K562 (cell line): ENCODE measurements at regions of chr3 and their contacts with region 1.

Region 1: GRCh38 chr3:33041909-33042308 is 55.0 kb downstream of the GLB1 start:
- DNase-seq: peak in 2 of 4 experiments; percentile 44 to 53
- ATAC-seq: peak; percentile 91
- H3K4me3 ChIP-seq: no peak overlapping the region
- H3K27ac ChIP-seq: no peak overlapping the region; the same call in 2 of the 3 replicates
- H3K4me1 ChIP-seq: peaks cover 2 to 4% of the 10 kb centered on the region in 2 experiments; a peak in 3 of 5 replicates
- H3K27me3 ChIP-seq: no peaks in the 10 kb centered on the region
- CTCF ChIP-seq: no peak
- EP300 ChIP-seq: peak; percentile 7; the same call in 1 of the 2 replicates
- POLR2A ChIP-seq: no peak
- RAD21 ChIP-seq: no peak

Region 2: DNA sequence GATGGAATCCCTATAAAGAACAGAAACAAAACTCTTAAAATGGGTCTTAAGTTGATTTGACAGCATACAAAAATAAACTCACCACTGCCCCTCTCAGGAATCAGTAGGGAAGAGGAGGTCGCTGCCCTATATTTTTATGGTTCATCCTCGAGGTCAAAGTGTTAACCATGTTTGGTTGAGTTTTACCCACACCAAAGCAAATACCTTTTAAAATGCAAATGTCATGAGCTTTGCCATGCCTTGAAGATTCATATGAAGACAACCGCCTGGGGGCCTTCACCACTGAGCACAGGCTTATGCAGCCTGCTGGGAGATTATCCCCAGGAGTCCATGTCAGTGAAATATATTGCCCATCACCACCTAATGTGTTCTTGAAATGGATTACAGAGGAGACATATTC is 11.1 kb before region 1 on chr3:
- CTCF ChIA-PET with region 1: no interaction called
- POLR2A ChIA-PET with region 1: interaction called, 14 read pairs
- in situ Hi-C with region 1: no loop called
- intact Hi-C with region 1: no loop called
- DNase-seq: peak in 2 of 4 experiments; percentile 29 to 30
- ATAC-seq: peak; percentile 63
- H3K4me3 ChIP-seq: no peak overlapping the region
- H3K27ac ChIP-seq: no peak overlapping the region
- H3K4me1 ChIP-seq: peaks cover 3% of the 10 kb centered on the region in 2 experiments; a peak in 2 of 5 replicates
- H3K27me3 ChIP-seq: no peaks in the 10 kb centered on the region
- CTCF ChIP-seq: peak; percentile 36 to 45 (median 36); a peak in 4 of 6 replicates
- EP300 ChIP-seq: no peak
- POLR2A ChIP-seq: no peak
- RAD21 ChIP-seq: peak in 1 of 2 experiments; percentile 48; a peak in 2 of 4 replicates